ENCODE measurements at regions of chrX and their contacts with region 1.

Region 1: GRCh38 chrX:19382555-19383145 is 38.9 kb downstream of the PDHA1 start:
- DNase-seq: peak; percentile 6
- H3K4me3 ChIP-seq: no peak overlapping the region
- H3K27ac ChIP-seq: no peak overlapping the region
- H3K4me1 ChIP-seq: no peaks in the 10 kb centered on the region
- H3K27me3 ChIP-seq: no peaks in the 10 kb centered on the region
- CTCF ChIP-seq: peak; percentile 38 to 68

Region 2: DNA sequence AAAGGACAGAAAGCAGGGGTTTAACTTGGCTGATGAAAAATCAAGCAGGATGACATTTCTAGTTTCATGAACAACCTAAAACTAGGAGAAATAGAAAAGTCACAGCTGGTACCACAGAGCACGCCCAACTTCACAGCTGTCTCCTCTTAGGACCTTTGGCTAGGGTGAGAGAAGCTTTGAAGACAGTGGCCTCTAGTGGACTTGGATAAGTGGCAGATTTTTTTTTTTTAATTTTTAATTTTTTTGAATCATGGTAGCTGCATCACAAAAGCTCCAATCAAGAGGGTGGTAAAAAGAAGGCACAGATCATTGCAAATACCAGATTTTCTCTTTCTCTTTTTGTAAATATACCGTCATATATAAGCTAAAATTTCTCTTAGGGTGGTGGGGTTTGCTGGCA is 152.8 kb after region 1 on chrX:
- CTCF ChIA-PET with region 1: interaction called, 13 read pairs
- dilution Hi-C with region 1: no loop called
- in situ Hi-C with region 1: no loop called
- intact Hi-C with region 1: no loop called
- DNase-seq: no peak
- H3K4me3 ChIP-seq: no peak overlapping the region
- H3K27ac ChIP-seq: no peak overlapping the region
- H3K4me1 ChIP-seq: no peaks in the 10 kb centered on the region
- H3K27me3 ChIP-seq: no peaks in the 10 kb centered on the region
- CTCF ChIP-seq: peak; percentile 13 to 40

Measured in mammary epithelial cell (primary cell).